Cardiac septum (tissue), 1 donor: ENCODE measurements at regions of chrX and their contacts with region 1.

Region 1: DNA sequence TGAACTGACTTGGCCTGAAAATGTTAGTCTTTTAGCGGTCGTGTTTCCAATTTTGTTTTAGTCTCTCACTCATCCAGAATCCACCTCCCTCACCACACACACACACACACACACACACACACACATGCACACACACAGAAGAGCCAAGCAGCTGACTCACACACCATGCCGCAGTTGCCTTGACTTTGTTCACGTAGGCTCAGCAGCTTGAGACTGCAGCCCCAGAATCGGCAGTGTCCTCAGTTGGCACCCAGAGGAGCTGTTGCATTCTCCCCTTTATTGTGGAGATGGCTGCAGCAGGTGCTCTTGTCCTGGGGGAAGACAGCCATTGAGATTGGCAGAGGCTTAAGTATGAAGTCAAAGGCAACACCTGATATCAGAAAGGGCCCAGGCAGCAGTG is 20.9 kb upstream of the XPNPEP2 start:
- DNase-seq: no peak

Region 2: DNA sequence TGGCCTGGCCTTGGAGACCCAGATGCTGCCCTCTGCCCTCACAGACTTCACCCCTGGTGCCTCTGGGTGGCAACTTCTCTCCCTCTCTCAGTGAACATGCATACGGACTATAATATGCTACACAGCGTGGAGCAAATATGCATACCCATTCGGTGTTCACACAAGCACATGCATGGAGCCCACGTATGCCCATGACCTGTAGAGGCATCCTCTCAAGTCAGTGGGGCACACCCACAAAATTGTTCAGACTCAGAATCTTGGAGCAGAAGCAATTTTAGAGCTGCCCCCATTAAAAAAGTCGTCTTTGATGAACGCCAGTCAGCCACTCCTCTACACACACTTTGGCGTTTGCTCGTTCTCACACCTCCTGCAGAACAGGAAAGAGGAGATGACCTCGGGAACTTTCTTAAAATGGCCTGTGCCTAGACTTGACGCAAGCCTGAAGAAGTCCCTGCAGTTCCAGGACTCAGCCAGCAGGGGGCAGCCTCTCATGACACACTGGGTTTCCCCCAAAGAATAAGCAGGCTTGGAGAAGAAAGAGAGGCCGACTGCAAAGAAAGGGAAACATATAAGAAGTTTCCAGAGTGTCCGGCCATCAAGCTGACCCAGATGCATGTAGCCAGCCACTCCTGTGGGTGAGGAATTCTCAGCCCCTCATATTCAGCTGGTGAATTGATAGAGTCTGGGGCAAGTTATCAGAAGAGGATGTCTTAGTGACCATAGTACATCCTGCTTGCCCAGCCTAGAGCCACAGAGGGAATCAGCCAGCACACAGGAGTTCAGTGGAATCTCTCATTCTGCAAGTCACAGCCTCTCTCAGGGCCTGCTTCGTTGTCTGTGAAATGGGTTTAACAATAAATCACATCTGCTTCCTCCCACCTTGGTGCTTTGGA is 80.4 kb before region 1 on chrX:
- intact Hi-C with region 1: no loop called
- DNase-seq: no peak

Region 3: DNA sequence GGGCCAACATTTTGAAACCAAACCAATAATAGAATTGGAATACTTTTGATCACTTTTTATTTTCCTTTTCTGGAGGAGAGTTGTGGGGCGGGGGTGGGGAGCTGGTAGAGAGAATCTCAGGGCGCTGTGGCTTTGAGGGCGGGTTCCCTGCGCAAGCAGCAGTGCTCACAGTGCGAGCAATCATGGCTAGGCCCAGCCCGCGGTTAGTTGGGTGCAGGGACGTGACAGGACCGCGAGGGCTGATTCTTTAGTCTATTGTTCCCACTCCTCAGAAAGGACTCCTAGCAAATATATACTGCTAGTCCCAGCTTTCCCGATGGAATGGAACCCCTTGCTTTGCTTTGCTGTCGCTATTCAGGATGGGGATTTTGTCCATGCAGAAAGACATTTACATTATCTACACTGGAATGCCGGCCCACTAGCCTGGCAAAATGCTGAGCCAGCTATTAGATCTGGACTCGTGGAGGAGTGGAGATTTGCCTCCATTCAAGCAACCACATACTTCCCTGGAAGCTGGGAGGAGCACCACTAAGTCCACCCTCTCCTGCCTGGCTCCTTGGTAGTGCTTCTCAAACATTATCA is 39.2 kb before region 1 on chrX:
- intact Hi-C with region 1: loop called (anchors 2 kb)
- DNase-seq: no peak

Region 4: GRCh38 chrX:129953881-129954280 is 236.0 kb after region 1 on chrX:
- intact Hi-C with region 1: no loop called
- DNase-seq: no peak